Activated CD4-positive, alpha-beta memory T cell treated with anti-CD3 and anti-CD28 coated beads for 36 hours (primary cell): ENCODE measurements at regions of chr4 and their contacts with region 1.

Region 1: DNA sequence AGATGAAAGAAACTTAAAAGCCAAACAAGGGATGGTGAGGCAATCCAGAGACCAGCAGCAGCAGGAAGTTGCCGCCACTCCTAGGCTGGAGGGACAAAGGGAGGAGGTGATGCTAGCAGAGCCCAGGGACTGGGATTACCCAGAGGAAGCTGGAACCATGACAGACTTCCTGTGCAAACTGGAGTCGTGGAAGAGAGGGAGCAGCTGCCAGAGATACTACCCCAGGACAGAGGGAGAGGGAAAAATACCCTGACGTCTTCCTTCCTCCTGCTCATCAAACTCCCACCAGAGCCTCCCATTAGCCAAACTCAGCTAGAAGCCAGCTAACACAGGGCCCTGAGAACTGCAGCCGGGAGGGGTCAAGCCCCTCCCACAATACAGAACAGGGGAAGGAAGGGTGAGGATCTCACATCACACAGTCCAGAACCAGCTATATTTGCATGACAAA is 101.2 kb upstream of the KLF3 start:
- DNase-seq: no peak
- H3K4me3 Mint-ChIP-seq: no peak overlapping the region
- H3K27ac Mint-ChIP-seq: no peak overlapping the region
- H3K4me1 Mint-ChIP-seq: peaks cover 20% of the 10 kb centered on the region
- H3K27me3 Mint-ChIP-seq: peaks cover 18% of the 10 kb centered on the region

Region 2: GRCh38 chr4:38455092-38455862 is 107.5 kb before region 1 on chr4:
- CTCF ChIA-PET with region 1: no interaction called
- POLR2A ChIA-PET with region 1: no interaction called
- intact Hi-C with region 1: loop called (anchors 10 kb)
- DNase-seq: no peak
- H3K4me3 Mint-ChIP-seq: no peak overlapping the region
- H3K27ac Mint-ChIP-seq: peak overlapping the region; percentile 79
- H3K4me1 Mint-ChIP-seq: peaks cover 49% of the 10 kb centered on the region
- H3K27me3 Mint-ChIP-seq: peaks cover 15% of the 10 kb centered on the region

Region 3: DNA sequence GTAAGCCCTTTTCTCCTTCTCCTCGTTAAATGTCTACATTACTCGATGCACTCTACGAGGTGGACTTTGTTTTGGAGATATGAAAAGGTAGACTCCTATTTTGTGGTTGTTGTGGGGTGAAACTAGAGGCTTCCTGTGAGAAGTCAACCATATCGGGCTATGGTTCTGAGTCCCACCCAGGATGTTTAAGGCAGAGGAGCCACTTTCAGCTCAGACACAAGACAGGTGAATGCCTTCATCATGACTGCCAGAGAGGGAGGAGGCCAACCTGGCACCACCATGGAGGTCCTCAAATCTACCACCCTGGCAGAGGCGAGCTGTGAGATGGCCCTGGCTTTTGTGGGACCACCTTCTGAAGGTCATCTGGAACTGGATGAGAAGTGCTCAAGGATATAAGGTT is 53.2 kb before region 1 on chr4:
- CTCF ChIA-PET with region 1: no interaction called
- POLR2A ChIA-PET with region 1: no interaction called
- intact Hi-C with region 1: loop called (anchors 2 kb)
- DNase-seq: peak; percentile 50
- H3K4me3 Mint-ChIP-seq: peak overlapping the region; percentile 24
- H3K27ac Mint-ChIP-seq: no peak overlapping the region
- H3K4me1 Mint-ChIP-seq: peaks cover 81% of the 10 kb centered on the region
- H3K27me3 Mint-ChIP-seq: no peaks in the 10 kb centered on the region

Region 4: GRCh38 chr4:38529189-38530115 is 33.3 kb before region 1 on chr4:
- CTCF ChIA-PET with region 1: no interaction called
- POLR2A ChIA-PET with region 1: interaction called, 8 read pairs
- intact Hi-C with region 1: loop called (anchors 1 kb)
- DNase-seq: peak; percentile 88
- H3K4me3 Mint-ChIP-seq: peak overlapping the region; percentile 15
- H3K27ac Mint-ChIP-seq: peak overlapping the region; percentile 85
- H3K4me1 Mint-ChIP-seq: peaks cover 42% of the 10 kb centered on the region
- H3K27me3 Mint-ChIP-seq: peaks cover 11% of the 10 kb centered on the region

Region 5: GRCh38 chr4:38619996-38620789 is 57.4 kb after region 1 on chr4:
- CTCF ChIA-PET with region 1: no interaction called
- POLR2A ChIA-PET with region 1: interaction called, 5 read pairs
- intact Hi-C with region 1: loop called (anchors 2 kb)
- DNase-seq: no peak
- H3K4me3 Mint-ChIP-seq: no peak overlapping the region
- H3K27ac Mint-ChIP-seq: no peak overlapping the region
- H3K4me1 Mint-ChIP-seq: peaks cover 20% of the 10 kb centered on the region
- H3K27me3 Mint-ChIP-seq: no peaks in the 10 kb centered on the region

Region 6: DNA sequence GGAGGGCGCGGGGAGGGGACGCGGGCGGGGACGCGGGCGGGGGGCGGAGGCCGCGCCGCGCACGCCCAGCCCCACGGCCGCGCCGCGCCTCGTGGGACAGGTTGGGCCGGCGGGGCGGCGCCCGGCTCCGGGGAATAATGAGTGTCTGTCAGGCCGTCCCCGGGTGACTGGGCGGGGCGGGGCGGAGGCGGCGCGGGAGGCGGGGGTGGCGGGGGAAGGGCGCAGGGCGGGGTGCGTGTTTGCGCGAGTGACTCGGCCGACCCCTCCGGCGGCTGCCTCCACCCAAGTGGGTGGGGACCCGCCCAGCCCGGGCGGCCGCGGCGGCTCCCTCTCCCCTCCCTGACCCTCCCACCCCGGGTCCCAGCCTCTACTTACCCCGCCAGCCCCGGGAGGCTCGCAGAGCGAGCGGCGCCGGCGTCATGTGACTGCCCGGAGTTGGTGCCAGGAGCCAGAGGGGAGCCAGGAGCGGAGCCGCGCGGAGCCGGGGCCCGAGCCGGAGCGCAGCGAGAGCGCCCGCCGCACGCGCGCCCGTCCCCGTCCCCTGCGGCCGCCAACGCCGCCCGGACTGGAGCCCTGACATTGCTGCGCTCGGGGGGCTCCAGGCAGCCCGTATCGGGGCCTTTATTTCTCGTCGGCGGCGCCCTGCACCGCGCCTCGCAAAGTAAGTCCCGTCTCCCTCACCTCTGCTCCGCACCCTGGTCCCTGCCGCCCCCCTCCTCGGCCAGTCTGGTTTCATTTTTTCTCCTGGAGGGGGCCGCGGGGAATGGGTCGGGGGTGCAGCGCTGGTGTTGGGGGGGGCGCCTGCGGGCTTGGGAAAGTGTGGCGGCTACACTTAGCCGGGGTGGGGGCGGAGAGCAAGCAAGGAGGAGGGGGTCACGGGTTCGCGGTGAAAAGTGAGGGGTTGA is 101.3 kb after region 1 on chr4 and contains the start of gene KLF3:
- CTCF ChIA-PET with region 1: no interaction called
- POLR2A ChIA-PET with region 1: no interaction called
- intact Hi-C with region 1: loop called (anchors 5 kb)
- DNase-seq: peak; percentile 86
- H3K4me3 Mint-ChIP-seq: peak within 1 kb of the TSS; percentile 83
- H3K27ac Mint-ChIP-seq: peak within 1 kb of the TSS; percentile 68
- H3K4me1 Mint-ChIP-seq: peaks cover 61% of the 10 kb centered on the region
- H3K27me3 Mint-ChIP-seq: no peaks in the 10 kb centered on the region
- total RNA-seq, gene KLF3: 9.1 to 9.9 TPM